ENCODE measurements at regions of chr19 and their contacts with region 1.

Region 1: GRCh38 chr19:15540435-15540834 is 32.1 kb downstream of the CYP4F22 start:
- DNase-seq: no peak
- H3K4me3 ChIP-seq: no peak overlapping the region
- H3K27ac ChIP-seq: no peak overlapping the region
- H3K4me1 ChIP-seq: no peaks in the 10 kb centered on the region
- H3K27me3 ChIP-seq: no peaks in the 10 kb centered on the region
- CTCF ChIP-seq: no peak
- EP300 ChIP-seq: no peak
- POLR2A ChIP-seq: no peak

Region 2: GRCh38 chr19:15466851-15467733 is 73.3 kb before region 1 on chr19:
- intact Hi-C with region 1: loop called in 1 of 4 experiments (anchors 10 kb)
- DNase-seq: no peak
- H3K4me3 ChIP-seq: no peak overlapping the region
- H3K27ac ChIP-seq: no peak overlapping the region
- H3K4me1 ChIP-seq: no peaks in the 10 kb centered on the region
- H3K27me3 ChIP-seq: no peaks in the 10 kb centered on the region
- CTCF ChIP-seq: no peak
- EP300 ChIP-seq: no peak
- POLR2A ChIP-seq: no peak

Region 3: DNA sequence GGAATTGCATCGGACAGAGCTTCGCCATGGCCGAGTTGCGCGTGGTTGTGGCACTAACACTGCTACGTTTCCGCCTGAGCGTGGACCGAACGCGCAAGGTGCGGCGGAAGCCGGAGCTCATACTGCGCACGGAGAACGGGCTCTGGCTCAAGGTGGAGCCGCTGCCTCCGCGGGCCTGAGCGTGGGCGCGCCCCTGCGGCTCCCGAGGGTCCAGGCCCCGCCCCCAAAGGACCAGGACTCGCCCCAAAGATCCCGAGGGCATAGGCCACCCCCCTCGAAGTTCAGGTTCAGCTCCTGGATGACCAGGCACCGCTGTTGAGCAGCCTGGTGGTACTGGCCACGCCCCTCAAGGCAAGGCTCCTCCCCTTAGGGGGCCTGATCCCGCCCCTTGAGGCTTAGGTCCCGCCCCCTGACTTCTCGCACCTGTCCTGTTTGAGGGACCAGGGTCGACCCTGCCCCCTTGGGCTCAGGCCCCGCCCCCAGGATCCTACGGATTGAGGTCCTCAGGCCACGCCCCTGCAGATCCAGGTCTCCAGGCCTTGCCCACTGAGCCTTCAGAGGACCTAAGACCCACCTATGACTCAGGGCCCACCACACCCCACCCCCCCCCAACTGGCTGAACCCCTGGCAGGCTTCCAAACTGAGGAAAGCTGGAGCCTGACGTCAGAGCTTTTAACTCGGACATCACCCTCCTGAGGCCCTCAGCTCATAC is 11.0 kb after region 1 on chr19:
- intact Hi-C with region 1: no loop called
- DNase-seq: peak in 4 of 5 donors; percentile 18 to 57 (median 31)
- H3K4me3 ChIP-seq: peak overlapping the region; percentile 14
- H3K27ac ChIP-seq: no peak overlapping the region
- H3K4me1 ChIP-seq: peaks cover 4% of the 10 kb centered on the region
- H3K27me3 ChIP-seq: no peaks in the 10 kb centered on the region
- CTCF ChIP-seq: no peak
- EP300 ChIP-seq: no peak
- POLR2A ChIP-seq: no peak

Region 4: GRCh38 chr19:15614507-15615379 is 74.3 kb after region 1 on chr19 and contains the start of gene CYP4F8:
- intact Hi-C with region 1: no loop called
- DNase-seq: no peak
- H3K4me3 ChIP-seq: no peak within 1 kb of the TSS
- H3K27ac ChIP-seq: no peak within 1 kb of the TSS
- H3K4me1 ChIP-seq: no peaks in the 10 kb centered on the region
- H3K27me3 ChIP-seq: no peaks in the 10 kb centered on the region
- CTCF ChIP-seq: no peak
- EP300 ChIP-seq: no peak
- POLR2A ChIP-seq: no peak
- total RNA-seq, gene CYP4F8: 1.1 TPM in 1 of 7 donors, not detected in the others

Measured in ovary (tissue), 10 donors.